Common myeloid progenitor, CD34-positive (primary cell): ENCODE measurements at regions of chr14 and their contacts with region 1.

Region 1: GRCh38 chr14:23528555-23528954 is 23.0 kb downstream of the ZFHX2 start:
- DNase-seq: no peak
- H3K4me3 ChIP-seq: no peak overlapping the region
- H3K27ac ChIP-seq: no peak overlapping the region
- H3K4me1 ChIP-seq: peaks cover 0 to 19% (median 14%) of the 10 kb centered on the region in 4 experiments
- H3K27me3 ChIP-seq: no peaks in the 10 kb centered on the region

Region 2: DNA sequence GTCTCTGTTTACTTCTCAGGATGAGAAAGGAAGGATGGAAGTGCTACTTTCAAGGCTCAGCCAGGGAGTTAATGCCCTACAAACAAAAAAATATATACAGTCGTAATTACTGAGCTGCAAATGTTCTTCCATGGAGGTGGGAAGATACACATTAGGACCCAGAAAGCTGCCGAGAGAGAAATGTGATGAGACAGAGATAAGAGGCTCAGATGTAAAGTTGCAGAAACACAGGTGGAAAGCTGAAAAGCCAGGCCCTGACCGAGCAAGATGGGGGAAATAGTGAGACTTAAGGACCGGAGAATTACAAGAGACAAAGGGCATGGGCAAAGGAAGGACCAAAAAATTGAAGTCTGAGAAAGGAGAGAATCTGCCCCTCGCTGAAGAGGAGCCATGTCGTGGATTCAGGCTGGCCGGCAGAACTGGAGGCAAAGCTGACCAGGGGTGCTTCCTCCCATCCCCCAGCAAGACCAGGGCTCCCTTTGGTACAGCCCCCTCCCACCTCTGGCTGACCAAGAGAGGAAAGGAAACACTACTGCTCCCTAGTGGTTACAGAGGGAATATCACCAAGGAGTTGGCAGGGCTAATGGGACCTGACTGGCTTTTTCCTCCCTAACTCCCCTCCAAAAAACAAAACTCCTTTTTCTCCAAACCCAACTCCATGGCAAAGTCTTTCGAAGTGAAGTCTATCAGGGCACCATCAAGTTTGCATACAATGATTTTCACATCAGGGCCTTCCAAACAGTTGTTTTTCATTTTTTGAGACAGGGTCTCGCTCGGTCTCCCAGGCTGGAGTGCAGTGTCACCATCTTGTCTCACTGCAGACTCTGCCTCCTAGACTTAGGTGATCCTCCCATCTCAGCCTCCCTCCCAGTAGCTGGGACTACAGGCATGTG is 10.9 kb after region 1 on chr14:
- CTCF ChIA-PET with region 1: interaction called, 44 read pairs
- POLR2A ChIA-PET with region 1: no interaction called
- DNase-seq: peak; percentile 36 to 51 (median 39)
- H3K4me3 ChIP-seq: no peak overlapping the region
- H3K27ac ChIP-seq: no peak overlapping the region
- H3K4me1 ChIP-seq: peaks cover 0 to 4% (median 0%) of the 10 kb centered on the region in 4 experiments
- H3K27me3 ChIP-seq: no peaks in the 10 kb centered on the region